K562 (cell line): ENCODE measurements at regions of chr1 and their contacts with region 1.

Region 1: DNA sequence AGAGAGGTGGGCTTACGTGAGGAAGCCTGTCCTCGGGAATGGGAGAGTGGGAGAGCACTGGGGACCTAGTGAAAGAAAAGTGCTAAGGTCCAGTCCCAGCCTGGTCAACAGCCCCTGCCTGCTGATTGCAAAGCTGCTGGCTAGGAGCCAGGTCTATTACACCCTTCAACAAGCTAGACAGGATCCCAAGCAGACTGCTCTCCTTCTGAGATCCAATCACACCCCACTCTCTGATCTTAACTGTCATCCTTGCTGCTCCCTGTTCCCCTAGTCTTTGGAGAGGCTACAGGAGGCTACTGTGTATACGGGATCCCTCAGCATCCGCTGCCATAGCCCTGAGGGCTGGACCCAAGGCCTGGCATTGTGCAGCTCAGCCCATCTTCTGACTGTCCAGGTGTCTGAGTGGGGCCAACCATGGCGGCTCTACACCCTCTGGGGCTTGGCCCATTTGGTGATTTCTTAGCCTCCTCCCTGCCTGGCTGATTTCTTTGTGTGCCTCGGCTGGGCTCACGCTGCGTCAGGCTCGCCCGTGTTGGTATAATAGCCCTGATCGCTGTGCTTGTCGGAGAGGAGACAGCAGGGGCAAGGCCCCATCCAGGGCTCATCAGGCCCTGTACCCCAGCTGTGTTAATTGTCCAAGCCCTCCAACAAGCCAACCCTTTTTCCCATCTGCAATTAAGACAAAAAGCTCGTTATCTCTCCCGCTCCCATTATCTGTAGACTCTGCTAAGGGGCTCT is 43.9 kb downstream of the NAV1 start:
- DNase-seq: peak; percentile 52 to 87 (median 70)
- ATAC-seq: peak; percentile 61
- H3K4me3 ChIP-seq: no peak overlapping the region
- H3K27ac ChIP-seq: peak overlapping the region; percentile 49
- H3K4me1 ChIP-seq: peaks cover 34 to 53% of the 10 kb centered on the region in 2 experiments
- H3K27me3 ChIP-seq: no peaks in the 10 kb centered on the region
- CTCF ChIP-seq: no peak
- EP300 ChIP-seq: no peak; the same call in 1 of the 2 replicates
- POLR2A ChIP-seq: no peak
- RAD21 ChIP-seq: no peak

Region 2: DNA sequence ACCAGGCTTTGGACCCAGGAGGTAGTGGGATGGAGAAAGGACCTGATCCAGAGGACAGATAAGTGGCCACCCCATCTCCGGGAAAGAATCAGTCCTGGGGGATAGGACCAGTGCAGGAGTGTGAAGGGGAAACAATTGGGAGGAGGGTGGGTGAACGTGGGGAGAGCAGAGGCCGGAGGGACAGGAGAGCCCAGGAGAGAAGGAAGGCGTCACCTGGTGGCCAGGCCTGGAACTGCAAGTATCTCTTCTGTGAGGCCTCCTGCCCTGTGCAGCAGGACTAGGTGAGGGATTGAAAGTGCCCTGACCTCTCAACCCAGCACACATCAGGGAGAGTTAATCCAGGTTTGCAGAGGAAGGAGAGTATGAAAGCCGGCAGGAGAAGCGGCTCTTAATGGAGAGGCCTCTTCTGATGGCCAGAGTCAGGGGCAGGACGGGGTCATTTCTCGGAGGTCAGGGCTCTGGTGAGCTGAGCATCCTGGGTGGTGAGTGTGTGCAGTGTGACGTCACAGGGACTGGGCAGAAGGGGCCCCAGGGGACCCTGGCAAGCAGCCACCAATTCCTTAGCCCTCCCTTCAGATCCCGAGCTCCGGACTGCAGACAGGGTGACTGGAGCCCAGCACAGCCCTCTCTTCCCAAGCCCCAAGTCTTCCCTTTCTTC is 174.6 kb before region 1 on chr1:
- CTCF ChIA-PET with region 1: no interaction called
- POLR2A ChIA-PET with region 1: no interaction called
- in situ Hi-C with region 1: no loop called
- intact Hi-C with region 1: no loop called
- DNase-seq: peak; percentile 86 to 92 (median 88)
- ATAC-seq: peak; percentile 97
- H3K4me3 ChIP-seq: no peak overlapping the region
- H3K27ac ChIP-seq: no peak overlapping the region
- H3K4me1 ChIP-seq: no peaks in the 10 kb centered on the region
- H3K27me3 ChIP-seq: peaks cover 33 to 69% of the 10 kb centered on the region in 2 experiments
- CTCF ChIP-seq: peak; percentile 88 to 98 (median 97)
- EP300 ChIP-seq: no peak
- POLR2A ChIP-seq: no peak
- RAD21 ChIP-seq: peak in 1 of 2 experiments; percentile 76; a peak in 2 of 4 replicates

Region 3: DNA sequence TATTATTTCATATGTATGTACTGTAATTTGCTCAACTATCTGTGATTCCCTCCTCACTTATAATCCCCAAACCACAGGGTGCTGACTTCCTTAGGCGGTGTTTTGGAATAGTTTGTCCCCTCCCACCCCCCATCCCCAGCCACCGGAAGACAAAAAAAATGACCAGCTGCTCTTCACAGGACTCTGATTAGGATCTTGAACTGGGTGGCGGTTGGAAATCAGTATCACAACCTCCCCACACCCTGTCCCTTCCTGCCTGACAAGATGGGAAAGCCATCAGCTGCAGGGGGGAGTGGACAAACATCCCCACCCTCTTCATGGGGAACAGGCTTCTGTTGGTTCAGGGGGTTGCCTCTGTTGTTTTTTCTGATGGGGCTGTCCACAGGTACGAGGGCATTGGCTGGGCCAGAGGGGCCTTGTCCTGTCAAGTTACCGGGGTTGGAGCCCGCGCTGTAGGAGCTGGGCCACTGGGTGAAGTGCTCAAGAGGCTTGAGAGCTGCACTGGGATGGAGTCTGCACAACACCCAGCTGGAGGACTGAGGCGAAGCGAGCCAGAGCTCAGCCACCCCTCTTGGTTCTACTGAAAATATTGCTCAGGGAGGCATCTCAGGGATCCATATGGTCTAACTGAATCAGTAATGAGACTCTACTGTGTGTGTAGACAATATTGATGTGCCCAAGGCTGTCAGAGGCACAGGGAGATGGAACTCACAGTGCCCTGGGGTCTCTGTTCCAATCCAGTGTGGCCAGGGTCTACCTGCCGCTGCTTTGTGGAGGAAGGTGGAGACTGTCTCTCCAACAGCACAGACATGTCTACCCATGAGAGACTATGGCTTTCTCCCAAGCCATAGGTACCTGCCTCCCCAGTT is 15.7 kb before region 1 on chr1:
- CTCF ChIA-PET with region 1: no interaction called
- POLR2A ChIA-PET with region 1: interaction called, 4 read pairs
- in situ Hi-C with region 1: no loop called
- intact Hi-C with region 1: loop called (anchors 1 kb)
- DNase-seq: peak; percentile 87 to 96 (median 92)
- ATAC-seq: peak; percentile 83
- H3K4me3 ChIP-seq: no peak overlapping the region
- H3K27ac ChIP-seq: peak overlapping the region; percentile 81
- H3K4me1 ChIP-seq: peaks cover 54 to 72% of the 10 kb centered on the region in 2 experiments
- H3K27me3 ChIP-seq: no peaks in the 10 kb centered on the region
- CTCF ChIP-seq: no peak
- EP300 ChIP-seq: peak; percentile 100
- POLR2A ChIP-seq: peak; percentile 62; the same call in 1 of the 2 replicates
- RAD21 ChIP-seq: peak; percentile 18 to 42; a peak in 3 of 4 replicates

Region 4: DNA sequence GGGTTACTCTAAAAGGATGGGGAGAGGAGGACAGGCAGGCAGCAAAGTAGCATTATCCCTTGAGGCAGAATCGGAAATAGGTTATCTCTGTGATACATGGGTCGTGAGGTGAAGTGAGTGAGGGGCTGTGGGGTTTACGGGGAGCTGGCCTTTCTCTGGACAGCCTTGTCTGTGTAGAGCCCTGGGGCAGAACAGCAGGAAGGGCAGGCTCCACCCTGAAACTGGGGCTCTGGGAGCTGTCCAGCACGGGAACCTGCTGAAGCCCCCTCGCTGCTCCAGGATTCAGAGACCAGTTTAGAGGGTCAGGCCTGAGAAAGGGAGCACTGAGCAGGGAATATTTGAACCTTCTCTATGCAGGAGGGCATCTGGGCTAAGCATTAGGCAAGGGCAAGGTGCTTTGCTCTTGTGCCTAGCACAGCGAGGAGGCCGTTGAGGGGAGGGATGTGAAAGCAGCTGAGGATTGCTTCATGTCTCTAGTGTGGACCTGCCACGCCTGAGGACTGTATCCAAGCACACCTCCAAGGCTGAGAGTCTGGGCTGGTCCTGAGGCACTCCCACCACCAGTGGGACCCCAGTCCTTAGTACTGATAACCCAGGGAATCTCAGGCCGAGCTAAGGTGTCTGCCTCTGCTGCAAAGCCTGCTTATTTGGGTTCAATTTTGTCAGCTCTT is 11.8 kb after region 1 on chr1:
- CTCF ChIA-PET with region 1: no interaction called
- POLR2A ChIA-PET with region 1: interaction called, 13 read pairs
- in situ Hi-C with region 1: no loop called
- intact Hi-C with region 1: no loop called
- DNase-seq: peak; percentile 68 to 83 (median 78)
- ATAC-seq: peak; percentile 86
- H3K4me3 ChIP-seq: no peak overlapping the region
- H3K27ac ChIP-seq: no peak overlapping the region
- H3K4me1 ChIP-seq: peaks cover 16 to 18% of the 10 kb centered on the region in 2 experiments
- H3K27me3 ChIP-seq: peaks cover 0 to 31% of the 10 kb centered on the region in 2 experiments; a peak in 3 of 5 replicates
- CTCF ChIP-seq: no peak
- EP300 ChIP-seq: no peak
- POLR2A ChIP-seq: no peak
- RAD21 ChIP-seq: no peak

Region 5: GRCh38 chr1:201625226-201625761 is 42.4 kb after region 1 on chr1:
- CTCF ChIA-PET with region 1: no interaction called
- POLR2A ChIA-PET with region 1: interaction called, 3 read pairs
- in situ Hi-C with region 1: no loop called
- intact Hi-C with region 1: loop called (anchors 1 kb)
- DNase-seq: no peak
- ATAC-seq: peak; percentile 26
- H3K4me3 ChIP-seq: no peak overlapping the region
- H3K27ac ChIP-seq: no peak overlapping the region
- H3K4me1 ChIP-seq: peaks cover 3 to 23% of the 10 kb centered on the region in 2 experiments; a peak in 4 of 5 replicates
- H3K27me3 ChIP-seq: no peaks in the 10 kb centered on the region
- CTCF ChIP-seq: no peak
- EP300 ChIP-seq: no peak
- POLR2A ChIP-seq: no peak
- RAD21 ChIP-seq: peak in 1 of 2 experiments; percentile 19; a peak in 1 of 4 replicates

Region 6: GRCh38 chr1:201649761-201650622 is 67.1 kb after region 1 on chr1:
- CTCF ChIA-PET with region 1: no interaction called
- POLR2A ChIA-PET with region 1: interaction called, 4 read pairs
- in situ Hi-C with region 1: no loop called
- intact Hi-C with region 1: loop called (anchors 2 kb)
- DNase-seq: peak; percentile 72 to 90 (median 87)
- ATAC-seq: peak; percentile 71
- H3K4me3 ChIP-seq: peak overlapping the region; percentile 42
- H3K27ac ChIP-seq: no peak overlapping the region; the same call in 2 of the 3 replicates
- H3K4me1 ChIP-seq: peaks cover 26 to 33% of the 10 kb centered on the region in 2 experiments
- H3K27me3 ChIP-seq: peaks cover 0 to 10% of the 10 kb centered on the region in 2 experiments; a peak in 1 of 5 replicates
- CTCF ChIP-seq: no peak
- EP300 ChIP-seq: no peak
- POLR2A ChIP-seq: no peak; the same call in 1 of the 2 replicates
- RAD21 ChIP-seq: no peak

Region 7: DNA sequence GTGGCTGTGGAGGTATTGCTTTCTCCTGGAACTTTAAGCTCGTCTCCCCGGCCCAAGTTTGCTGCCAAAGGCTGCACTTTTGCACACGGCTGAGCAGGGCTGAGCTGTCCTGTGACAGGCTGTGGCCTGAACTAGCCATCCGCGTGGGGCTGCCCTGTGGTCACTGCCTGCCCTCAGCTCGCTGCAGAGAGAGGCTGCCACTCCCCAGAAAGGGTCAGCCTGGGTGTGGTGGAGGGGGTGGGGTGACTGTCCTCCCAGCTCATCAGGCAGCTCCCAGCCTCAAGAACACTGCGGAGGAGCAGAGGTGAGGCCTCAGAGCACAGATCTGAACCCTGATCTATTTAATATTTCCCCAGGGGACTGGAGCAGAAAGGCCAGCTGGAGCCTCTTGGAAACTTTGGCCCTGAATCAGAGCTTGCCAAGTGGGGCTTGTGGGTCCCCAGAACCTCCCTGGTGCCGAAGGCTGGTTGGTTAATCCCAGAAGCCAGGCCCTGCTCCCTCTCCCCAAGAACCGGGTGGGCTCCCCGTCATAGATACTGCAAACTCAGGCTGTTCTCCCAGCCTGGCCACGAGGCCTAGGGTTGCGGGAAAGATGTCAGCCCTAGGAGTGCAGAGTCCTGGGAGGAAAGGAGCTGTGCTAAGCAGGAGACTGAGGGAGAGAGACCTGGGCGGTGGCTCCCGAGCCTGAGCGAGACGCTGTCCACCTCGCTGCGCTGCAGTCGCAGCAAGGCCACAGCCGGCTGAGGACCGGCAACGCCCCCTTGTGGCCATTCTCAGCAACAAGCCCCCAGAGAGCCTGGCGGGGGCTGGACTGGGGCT is 121.0 kb after region 1 on chr1:
- CTCF ChIA-PET with region 1: no interaction called
- POLR2A ChIA-PET with region 1: interaction called, 4 read pairs
- in situ Hi-C with region 1: no loop called
- intact Hi-C with region 1: loop called (anchors 1 kb)
- DNase-seq: peak; percentile 90 to 96 (median 94)
- ATAC-seq: peak; percentile 98
- H3K4me3 ChIP-seq: no peak overlapping the region
- H3K27ac ChIP-seq: no peak overlapping the region
- H3K4me1 ChIP-seq: peaks cover 11 to 15% of the 10 kb centered on the region in 2 experiments
- H3K27me3 ChIP-seq: peaks cover 0 to 4% of the 10 kb centered on the region in 2 experiments; a peak in 1 of 5 replicates
- CTCF ChIP-seq: peak; percentile 98 to 99 (median 99)
- EP300 ChIP-seq: peak; percentile 21; the same call in 1 of the 2 replicates
- POLR2A ChIP-seq: no peak
- RAD21 ChIP-seq: peak; percentile 100